ENCODE measurements at regions of chr4 and their contacts with region 1.

Region 1: DNA sequence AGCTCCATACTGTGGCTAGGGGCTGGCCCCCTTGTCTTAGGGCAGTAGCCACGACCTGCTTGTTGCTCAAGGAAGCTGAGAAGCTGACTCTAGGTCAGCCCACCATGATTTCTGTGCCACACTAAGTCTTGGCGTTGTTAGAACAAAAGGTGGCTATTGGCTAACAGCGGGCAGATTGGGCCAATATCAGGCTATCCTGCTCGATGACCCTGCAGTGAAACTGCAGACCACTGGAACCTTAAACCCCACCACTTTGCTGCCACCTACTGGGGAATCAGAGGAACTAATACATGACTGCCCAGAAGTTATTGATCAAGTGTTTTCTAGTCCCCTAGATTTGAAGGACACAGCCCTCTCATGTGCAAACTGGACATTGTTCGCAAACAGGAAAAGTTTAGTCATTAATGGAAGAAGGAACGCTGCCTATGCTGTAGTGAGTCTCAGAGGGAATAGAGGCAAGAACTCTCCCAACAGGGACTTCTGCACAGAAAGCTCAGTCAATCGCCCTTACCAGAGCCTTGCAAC is 17.0 kb upstream of the PAPSS1 start:
- DNase-seq: peak; percentile 57
- H3K4me3 Mint-ChIP-seq: no peak overlapping the region
- H3K27ac Mint-ChIP-seq: no peak overlapping the region
- H3K4me1 Mint-ChIP-seq: no peaks in the 10 kb centered on the region
- H3K27me3 Mint-ChIP-seq: no peaks in the 10 kb centered on the region
- CTCF ChIP-seq: peak; percentile 77

Region 2: DNA sequence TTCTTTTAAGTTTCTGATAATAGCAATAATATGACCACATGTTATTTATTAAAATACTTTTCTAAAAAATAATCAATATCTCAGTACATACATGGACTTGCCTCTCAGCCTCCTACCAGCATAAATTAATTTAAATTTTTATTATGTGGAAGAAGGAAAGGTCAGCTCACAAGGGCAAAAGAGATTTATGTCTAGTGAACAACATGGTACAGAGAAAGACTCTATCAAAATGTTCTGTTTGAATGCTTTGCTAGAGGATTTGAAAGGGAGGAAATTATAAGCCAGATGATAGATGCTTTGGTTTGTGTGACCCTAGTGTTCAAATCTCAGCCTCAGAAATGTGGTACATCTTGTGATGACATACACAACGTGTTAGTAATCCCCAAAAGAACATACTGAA is 795.1 kb before region 1 on chr4:
- CTCF ChIA-PET with region 1: no interaction called
- POLR2A ChIA-PET with region 1: no interaction called
- intact Hi-C with region 1: no loop called
- DNase-seq: no peak
- H3K4me3 Mint-ChIP-seq: no peak overlapping the region
- H3K27ac Mint-ChIP-seq: no peak overlapping the region
- H3K4me1 Mint-ChIP-seq: no peaks in the 10 kb centered on the region
- H3K27me3 Mint-ChIP-seq: no peaks in the 10 kb centered on the region
- CTCF ChIP-seq: no peak

Region 3: GRCh38 chr4:107050525-107051135 is 686.4 kb before region 1 on chr4:
- CTCF ChIA-PET with region 1: interaction called, 5 read pairs
- POLR2A ChIA-PET with region 1: no interaction called
- intact Hi-C with region 1: loop called (anchors 5 kb)
- DNase-seq: peak; percentile 38
- H3K4me3 Mint-ChIP-seq: no peak overlapping the region
- H3K27ac Mint-ChIP-seq: no peak overlapping the region
- H3K4me1 Mint-ChIP-seq: no peaks in the 10 kb centered on the region
- H3K27me3 Mint-ChIP-seq: no peaks in the 10 kb centered on the region
- CTCF ChIP-seq: peak; percentile 59

Region 4: GRCh38 chr4:107747748-107748486 is 10.9 kb after region 1 on chr4:
- CTCF ChIA-PET with region 1: interaction called, 58 read pairs
- POLR2A ChIA-PET with region 1: interaction called, 3 read pairs
- intact Hi-C with region 1: no loop called
- DNase-seq: no peak
- H3K4me3 Mint-ChIP-seq: no peak overlapping the region
- H3K27ac Mint-ChIP-seq: no peak overlapping the region
- H3K4me1 Mint-ChIP-seq: no peaks in the 10 kb centered on the region
- H3K27me3 Mint-ChIP-seq: peaks cover 34% of the 10 kb centered on the region
- CTCF ChIP-seq: no peak

Region 5: GRCh38 chr4:107996949-107997788 is 260.2 kb after region 1 on chr4:
- CTCF ChIA-PET with region 1: no interaction called
- POLR2A ChIA-PET with region 1: no interaction called
- intact Hi-C with region 1: no loop called
- DNase-seq: no peak
- H3K4me3 Mint-ChIP-seq: no peak overlapping the region
- H3K27ac Mint-ChIP-seq: peak overlapping the region; percentile 16
- H3K4me1 Mint-ChIP-seq: peaks cover 50% of the 10 kb centered on the region
- H3K27me3 Mint-ChIP-seq: no peaks in the 10 kb centered on the region
- CTCF ChIP-seq: no peak